Adrenal gland (tissue), 19 donors: ENCODE measurements at regions of chrX and their contacts with region 1.

Region 1: DNA sequence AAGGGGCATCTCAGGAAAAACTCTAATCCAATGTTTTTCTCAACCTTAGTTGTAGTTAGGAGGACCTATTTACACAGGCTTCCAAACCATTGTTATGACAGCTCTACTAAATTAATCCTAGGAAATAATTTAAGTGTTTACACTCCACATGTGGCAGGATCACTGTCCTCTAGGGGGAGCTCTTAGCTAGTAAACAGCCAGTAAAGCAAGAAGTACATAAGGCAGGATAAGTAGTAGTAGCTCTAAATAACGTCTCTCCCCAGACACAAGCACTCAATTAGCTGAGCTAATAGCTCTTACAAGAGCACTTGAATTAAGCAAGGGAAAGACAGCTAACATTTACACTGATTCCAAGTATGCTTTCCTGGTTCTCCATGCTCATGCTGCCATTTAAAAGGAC is 37.3 kb downstream of the NUDT11 start:
- DNase-seq: peak in 3 of 7 donors; percentile 10 to 31 (median 16)
- H3K4me3 ChIP-seq: no peak overlapping the region
- H3K27ac ChIP-seq: no peak overlapping the region
- H3K4me1 ChIP-seq: no peaks in the 10 kb centered on the region
- H3K27me3 ChIP-seq: peaks cover 7% of the 10 kb centered on the region
- CTCF ChIP-seq: peak in 5 of 6 experiments; percentile 13 to 46 (median 32)
- POLR2A ChIP-seq: no peak

Region 2: DNA sequence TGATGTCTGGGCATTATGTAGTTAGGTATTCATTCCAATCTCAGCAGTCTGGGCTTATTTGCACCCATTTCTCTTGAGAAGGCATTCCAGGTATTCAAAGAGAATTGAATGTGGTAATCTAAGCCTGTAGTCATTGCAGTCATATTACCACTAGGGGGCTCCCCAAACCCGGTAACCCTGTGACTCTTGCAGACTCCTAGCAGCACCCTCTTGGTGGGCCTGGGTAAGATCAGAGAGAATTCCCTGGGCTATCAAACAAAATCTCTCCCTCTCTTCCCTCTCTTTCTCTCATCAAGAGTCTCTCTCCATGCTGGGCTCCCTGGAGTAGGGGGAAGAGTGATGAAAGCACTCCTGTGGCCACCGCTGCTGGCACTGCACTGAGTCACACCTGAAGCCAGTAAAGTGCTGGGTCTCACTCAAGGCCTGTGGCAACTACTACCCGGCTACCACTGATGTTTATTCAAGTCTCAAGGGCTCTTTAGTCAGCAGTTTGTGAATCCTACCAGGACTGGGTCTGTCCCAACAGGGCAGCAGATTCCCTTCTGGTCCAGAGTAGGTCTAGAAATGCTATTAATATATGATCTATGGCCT is 314.2 kb before region 1 on chrX:
- intact Hi-C with region 1: loop called in 1 of 2 experiments (anchors 10 kb)
- DNase-seq: peak; percentile 21 to 51 (median 34)
- H3K4me3 ChIP-seq: no peak overlapping the region
- H3K27ac ChIP-seq: no peak overlapping the region
- H3K4me1 ChIP-seq: no peaks in the 10 kb centered on the region
- H3K27me3 ChIP-seq: peaks cover 20% of the 10 kb centered on the region
- CTCF ChIP-seq: peak; percentile 16 to 62 (median 39)
- POLR2A ChIP-seq: no peak

Region 3: GRCh38 chrX:51568586-51568985 is 109.5 kb after region 1 on chrX:
- intact Hi-C with region 1: no loop called
- DNase-seq: no peak
- H3K4me3 ChIP-seq: no peak overlapping the region
- H3K27ac ChIP-seq: no peak overlapping the region
- H3K4me1 ChIP-seq: no peaks in the 10 kb centered on the region
- H3K27me3 ChIP-seq: peaks cover 6% of the 10 kb centered on the region
- CTCF ChIP-seq: no peak
- POLR2A ChIP-seq: no peak